Heart right ventricle (tissue), 16 donors: ENCODE measurements at regions of chr5 and their contacts with region 1.

Region 1: DNA sequence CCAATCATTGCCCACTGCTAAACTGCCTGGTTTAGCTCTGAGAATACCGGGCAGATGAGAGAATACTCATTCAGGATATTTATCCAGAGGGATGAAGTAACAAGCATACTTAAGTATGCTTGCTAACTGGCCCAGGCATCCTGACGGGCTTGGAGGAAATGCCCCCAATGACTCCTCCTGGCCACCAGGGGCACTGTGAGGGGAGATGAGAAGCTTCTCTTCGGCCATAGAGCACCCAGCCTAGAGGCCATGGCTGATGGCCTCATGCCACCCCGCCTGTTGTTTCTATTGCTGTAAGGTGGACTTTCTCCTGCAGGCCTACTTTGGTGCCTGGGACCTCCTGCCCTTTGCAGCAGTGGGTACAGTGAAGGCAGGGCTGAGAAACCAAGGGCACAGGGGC is 134.5 kb upstream of the FSTL4 start:
- DNase-seq: no peak
- ATAC-seq: no peak
- H3K4me3 ChIP-seq: no peak overlapping the region
- H3K27ac ChIP-seq: no peak overlapping the region
- H3K4me1 ChIP-seq: peaks cover 0 to 4% (median 0%) of the 10 kb centered on the region in 9 donors
- H3K27me3 ChIP-seq: peaks cover 0 to 12% (median 8%) of the 10 kb centered on the region in 7 donors
- CTCF ChIP-seq: peak in 1 of 9 donors; percentile 16

Region 2: GRCh38 chr5:133763744-133764143 is 16.9 kb after region 1 on chr5:
- intact Hi-C with region 1: loop called in 1 of 10 experiments (anchors 1 kb)
- DNase-seq: no peak
- ATAC-seq: peak in 4 of 8 donors; percentile 35 to 63 (median 48)
- H3K4me3 ChIP-seq: no peak overlapping the region
- H3K27ac ChIP-seq: no peak overlapping the region
- H3K4me1 ChIP-seq: no peaks in the 10 kb centered on the region
- H3K27me3 ChIP-seq: peaks cover 0 to 30% (median 14%) of the 10 kb centered on the region in 7 donors
- CTCF ChIP-seq: no peak